PC-9 (cell line): ENCODE measurements at regions of chr20 and their contacts with region 1.

Region 1: DNA sequence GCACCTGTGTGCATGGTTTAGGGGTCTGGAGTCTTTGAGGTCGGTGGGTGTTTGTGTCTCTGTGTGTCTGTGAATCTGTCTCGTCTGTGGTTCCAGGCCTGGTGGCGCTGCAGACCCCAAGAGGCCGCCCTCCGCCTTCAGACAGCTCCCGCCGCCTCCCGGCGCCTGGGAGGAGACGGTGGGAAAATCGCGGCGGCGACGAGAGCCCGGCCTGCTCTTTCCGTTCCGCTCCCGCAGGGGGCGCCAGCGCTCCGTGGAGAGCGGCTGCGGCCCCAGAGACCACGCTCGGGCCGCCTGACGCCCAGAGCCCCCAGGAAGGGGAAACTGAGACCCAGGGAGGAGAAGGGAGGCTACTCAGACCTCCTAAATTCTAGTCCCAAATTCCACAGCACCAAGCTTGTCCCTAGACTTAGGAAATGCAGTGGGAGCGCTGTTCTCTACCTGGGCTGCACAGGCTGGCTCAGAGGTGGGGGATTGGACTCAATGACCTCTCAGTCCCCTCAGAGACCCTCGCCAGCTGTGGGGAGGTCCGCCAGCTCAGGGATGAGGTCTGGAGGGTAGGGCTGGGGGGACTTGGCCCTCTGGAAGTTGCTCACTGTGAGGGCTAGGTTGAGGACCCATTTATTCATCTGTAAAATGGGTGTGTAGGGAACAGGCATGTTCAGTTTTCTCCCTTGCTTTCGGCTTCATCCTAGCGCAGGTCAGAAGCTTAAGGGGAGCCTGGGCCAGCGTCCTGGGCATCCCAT is 36.9 kb upstream of the BLCAP start:
- DNase-seq: peak in 1 of 2 experiments; percentile 61
- H3K4me3 ChIP-seq: no peak overlapping the region
- H3K27ac ChIP-seq: no peak overlapping the region
- H3K4me1 ChIP-seq: no peaks in the 10 kb centered on the region
- H3K27me3 ChIP-seq: peaks cover 49% of the 10 kb centered on the region
- CTCF ChIP-seq: peak; percentile 95

Region 2: GRCh38 chr20:37901654-37902503 is 337.3 kb after region 1 on chr20:
- CTCF ChIA-PET with region 1: no interaction called
- POLR2A ChIA-PET with region 1: no interaction called
- intact Hi-C with region 1: loop called (anchors 10 kb)
- DNase-seq: peak in 1 of 2 experiments; percentile 33
- H3K4me3 ChIP-seq: no peak overlapping the region
- H3K27ac ChIP-seq: no peak overlapping the region
- H3K4me1 ChIP-seq: no peaks in the 10 kb centered on the region
- H3K27me3 ChIP-seq: peaks cover 29% of the 10 kb centered on the region
- CTCF ChIP-seq: peak; percentile 54

Region 3: DNA sequence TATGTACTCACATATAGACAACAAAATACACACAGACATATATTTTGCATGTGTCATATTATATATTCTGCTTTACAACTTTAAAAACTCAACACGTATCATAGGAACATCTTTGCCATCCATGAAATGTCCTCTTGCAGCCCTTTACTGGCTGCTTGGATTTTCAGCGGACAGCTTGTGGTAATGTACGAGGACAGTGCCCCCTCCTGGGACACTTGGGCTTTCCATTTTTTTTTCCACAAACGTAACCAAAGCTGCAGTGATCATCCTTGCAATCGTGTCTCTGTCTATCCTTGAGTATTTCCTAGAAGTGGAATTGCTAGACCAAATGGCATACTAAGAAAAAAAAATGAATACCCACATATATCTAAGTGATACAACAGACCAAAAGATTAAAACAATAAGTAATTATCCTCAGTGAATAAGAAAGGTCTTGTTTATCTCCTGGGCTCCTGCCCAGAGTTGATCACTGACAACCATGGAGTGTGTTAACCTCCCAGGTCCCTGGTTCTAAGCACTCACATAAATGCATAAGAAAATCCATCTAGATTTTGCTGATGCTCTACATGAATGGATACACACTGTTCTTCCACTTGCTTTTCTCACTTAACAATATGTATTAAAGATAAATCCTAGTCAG is 757.5 kb after region 1 on chr20:
- CTCF ChIA-PET with region 1: no interaction called
- POLR2A ChIA-PET with region 1: no interaction called
- intact Hi-C with region 1: loop called (anchors 5 kb)
- DNase-seq: peak in 1 of 2 experiments; percentile 47
- H3K4me3 ChIP-seq: no peak overlapping the region
- H3K27ac ChIP-seq: no peak overlapping the region
- H3K4me1 ChIP-seq: no peaks in the 10 kb centered on the region
- H3K27me3 ChIP-seq: peaks cover 49% of the 10 kb centered on the region
- CTCF ChIP-seq: peak; percentile 81

Region 4: GRCh38 chr20:38406476-38406875 is 841.9 kb after region 1 on chr20:
- CTCF ChIA-PET with region 1: no interaction called
- POLR2A ChIA-PET with region 1: no interaction called
- intact Hi-C with region 1: loop called (anchors 5 kb)
- DNase-seq: no peak
- H3K4me3 ChIP-seq: no peak overlapping the region
- H3K27ac ChIP-seq: no peak overlapping the region
- H3K4me1 ChIP-seq: no peaks in the 10 kb centered on the region
- H3K27me3 ChIP-seq: no peaks in the 10 kb centered on the region
- CTCF ChIP-seq: no peak